ENCODE measurements at regions of chr6 and their contacts with region 1.

Region 1: DNA sequence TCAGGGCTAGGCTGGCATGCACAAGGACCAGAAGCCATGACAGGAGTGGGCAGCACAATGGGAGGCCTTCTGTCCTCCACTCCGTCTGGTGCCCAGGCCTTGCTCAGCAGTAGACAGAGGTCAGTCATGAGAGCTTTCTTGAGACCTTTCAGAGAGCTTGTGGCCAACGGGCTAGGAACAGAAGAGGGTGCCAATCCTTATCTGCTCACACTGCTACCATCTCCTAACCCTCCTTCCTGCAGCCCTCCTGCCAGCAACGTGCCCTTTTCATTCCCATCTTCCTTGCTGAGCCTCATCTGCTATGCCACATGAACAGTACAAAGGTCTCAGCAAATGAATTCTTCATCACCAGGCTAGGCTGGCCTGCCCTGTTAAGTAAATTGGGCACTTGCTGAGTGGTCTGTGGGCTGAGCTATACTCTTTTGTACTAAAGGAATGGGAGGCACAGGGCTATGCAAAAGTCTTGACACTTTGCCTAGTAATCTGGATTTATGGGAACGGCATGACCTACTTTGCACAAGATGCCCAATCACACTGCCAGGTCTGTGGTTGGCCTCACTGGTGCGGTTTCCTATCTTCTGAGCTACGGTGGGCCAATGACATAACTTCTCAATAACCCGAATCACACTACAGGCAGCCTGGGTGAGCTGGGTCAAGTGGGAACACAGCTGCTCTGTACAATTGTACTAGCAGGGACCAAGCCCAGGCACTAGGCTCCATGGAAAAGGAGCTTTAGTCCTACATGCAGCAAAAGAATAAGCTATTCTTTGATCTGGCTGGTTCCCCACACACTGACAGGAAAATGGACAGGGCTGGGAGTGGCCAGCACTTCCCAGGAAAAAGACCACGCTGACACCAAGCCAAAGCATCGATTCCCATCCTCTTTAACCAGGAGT is 47.8 kb downstream of the ELOVL5 start:
- DNase-seq: peak in 9 of 10 donors; percentile 37 to 73 (median 62)
- H3K4me3 ChIP-seq: peak overlapping the region in 8 of 59 donors; percentile 1 to 36 (median 11)
- H3K27ac ChIP-seq: peak overlapping the region; percentile 49 to 97 (median 91)
- H3K27me3 ChIP-seq: no peaks in the 10 kb centered on the region
- CTCF ChIP-seq: peak in 5 of 56 donors; percentile 8 to 16 (median 11)

Region 2: GRCh38 chr6:53348371-53349208 is 47.7 kb after region 1 on chr6 and contains the start of gene ELOVL5:
- intact Hi-C with region 1: loop called (anchors 5 kb)
- DNase-seq: peak; percentile 95 to 100 (median 99)
- H3K4me3 ChIP-seq: peak within 1 kb of the TSS; percentile 64 to 100 (median 94)
- H3K27ac ChIP-seq: peak within 1 kb of the TSS; percentile 79 to 99 (median 98)
- H3K27me3 ChIP-seq: no peaks in the 10 kb centered on the region
- CTCF ChIP-seq: peak in 11 of 56 donors; percentile 5 to 19 (median 11)
- total RNA-seq, gene ELOVL5: 39.4 to 153 (median 66.8) TPM

Measured in dorsolateral prefrontal cortex (tissue), 120 donors.